Gastrocnemius medialis (tissue), 4 donors: ENCODE measurements at regions of chr19 and their contacts with region 1.

Region 1: DNA sequence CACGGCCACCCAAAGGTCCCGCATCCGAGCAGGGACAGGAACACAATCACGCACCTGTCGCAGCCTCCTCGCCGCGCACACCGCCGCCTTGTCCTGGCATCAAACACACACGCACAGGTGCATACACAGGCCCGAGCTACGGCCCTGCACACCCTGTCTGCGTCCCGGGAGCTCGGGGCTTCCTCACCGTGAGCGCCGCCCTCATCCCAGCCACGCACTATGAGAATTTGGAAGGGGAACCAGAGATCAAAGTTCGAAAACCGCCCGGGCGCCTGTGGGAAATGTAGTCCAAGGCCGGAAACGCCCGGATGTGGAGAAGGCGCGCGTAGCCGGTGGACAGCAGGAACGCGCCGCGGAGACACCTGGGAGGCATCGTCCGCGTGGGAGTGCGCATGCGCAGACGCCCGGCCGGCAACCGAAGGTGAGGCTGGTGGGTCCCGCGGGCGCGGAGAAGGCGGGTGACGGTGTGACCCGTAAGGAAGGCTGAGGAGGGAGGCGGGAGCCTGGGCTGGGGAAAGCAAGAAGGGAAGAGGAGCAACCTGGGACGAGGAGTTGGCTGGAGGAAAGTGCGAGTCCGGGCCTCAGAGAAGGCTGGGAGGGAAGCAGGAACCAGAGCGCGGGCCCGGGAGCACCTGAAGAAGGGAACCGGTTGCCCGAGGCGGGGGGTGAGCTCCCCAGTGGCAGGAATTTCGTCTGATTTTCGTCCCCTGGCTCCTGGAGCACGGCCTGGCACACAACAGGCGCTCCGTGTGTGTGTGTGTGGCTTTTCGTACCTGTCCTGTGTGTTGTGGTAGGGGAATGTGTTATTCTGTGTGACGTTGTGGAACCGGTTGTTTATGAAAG is at the start of gene ZNF567:
- DNase-seq: peak; percentile 93 to 96
- ATAC-seq: peak; percentile 99
- H3K4me3 ChIP-seq: peak within 1 kb of the TSS; percentile 76 to 96 (median 90)
- H3K27ac ChIP-seq: peak within 1 kb of the TSS; percentile 77 to 87 (median 81)
- H3K4me1 ChIP-seq: peaks cover 13 to 16% of the 10 kb centered on the region in 2 donors
- H3K27me3 ChIP-seq: no peaks in the 10 kb centered on the region
- CTCF ChIP-seq: no peak
- POLR2A ChIP-seq: peak; percentile 68 to 74
- total RNA-seq, gene ZNF567: 1.1 to 3.5 (median 1.9) TPM

Region 2: GRCh38 chr19:36573020-36573885 is 114.2 kb before region 1 on chr19 and contains the start of gene ZNF529:
- in situ Hi-C with region 1: no loop called
- intact Hi-C with region 1: loop called (anchors 10 kb)
- DNase-seq: peak; percentile 79 to 85
- ATAC-seq: peak; percentile 99
- H3K4me3 ChIP-seq: peak within 1 kb of the TSS; percentile 85 to 100 (median 94)
- H3K27ac ChIP-seq: peak within 1 kb of the TSS; percentile 81 to 91 (median 88)
- H3K4me1 ChIP-seq: peaks cover 16 to 17% of the 10 kb centered on the region in 2 donors
- H3K27me3 ChIP-seq: no peaks in the 10 kb centered on the region
- CTCF ChIP-seq: no peak
- POLR2A ChIP-seq: peak; percentile 73 to 75
- total RNA-seq, gene ZNF529: 4.1 to 6.6 (median 5.4) TPM

Region 3: DNA sequence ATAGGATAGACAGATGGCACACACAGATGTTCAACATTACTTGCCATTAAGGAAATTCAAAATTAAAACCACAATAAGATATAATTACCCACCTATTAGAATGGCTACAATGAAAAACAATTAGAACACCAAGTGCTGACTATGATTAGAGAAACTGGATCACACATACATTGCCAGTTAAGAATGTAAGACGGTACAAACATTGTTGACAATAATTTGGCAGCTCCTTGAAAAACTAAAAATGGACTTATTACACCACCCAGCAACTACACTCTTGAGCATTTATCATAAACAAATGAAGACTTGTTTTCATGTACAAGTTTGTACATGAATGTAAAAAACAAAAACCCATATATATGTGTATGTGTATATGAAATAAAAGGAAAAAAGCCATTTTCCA is 34.5 kb before region 1 on chr19:
- in situ Hi-C with region 1: no loop called
- intact Hi-C with region 1: no loop called
- DNase-seq: no peak
- ATAC-seq: no peak
- H3K4me3 ChIP-seq: no peak overlapping the region
- H3K27ac ChIP-seq: no peak overlapping the region
- H3K4me1 ChIP-seq: no peaks in the 10 kb centered on the region
- H3K27me3 ChIP-seq: no peaks in the 10 kb centered on the region
- CTCF ChIP-seq: no peak
- POLR2A ChIP-seq: no peak

Region 4: GRCh38 chr19:36772311-36773222 is 85.1 kb after region 1 on chr19 and contains the start of gene ZNF850:
- in situ Hi-C with region 1: no loop called
- intact Hi-C with region 1: loop called (anchors 1 kb)
- DNase-seq: peak; percentile 82 to 83
- ATAC-seq: peak; percentile 97 to 98
- H3K4me3 ChIP-seq: peak within 1 kb of the TSS; percentile 71 to 98 (median 86)
- H3K27ac ChIP-seq: peak within 1 kb of the TSS; percentile 74 to 89 (median 84)
- H3K4me1 ChIP-seq: peaks cover 11 to 20% of the 10 kb centered on the region in 2 donors
- H3K27me3 ChIP-seq: peaks cover 0 to 4% (median 0%) of the 10 kb centered on the region in 3 donors
- CTCF ChIP-seq: no peak
- POLR2A ChIP-seq: peak in 1 of 2 donors; percentile 30
- total RNA-seq, gene ZNF850: 0.24 to 0.55 (median 0.42) TPM

Region 5: DNA sequence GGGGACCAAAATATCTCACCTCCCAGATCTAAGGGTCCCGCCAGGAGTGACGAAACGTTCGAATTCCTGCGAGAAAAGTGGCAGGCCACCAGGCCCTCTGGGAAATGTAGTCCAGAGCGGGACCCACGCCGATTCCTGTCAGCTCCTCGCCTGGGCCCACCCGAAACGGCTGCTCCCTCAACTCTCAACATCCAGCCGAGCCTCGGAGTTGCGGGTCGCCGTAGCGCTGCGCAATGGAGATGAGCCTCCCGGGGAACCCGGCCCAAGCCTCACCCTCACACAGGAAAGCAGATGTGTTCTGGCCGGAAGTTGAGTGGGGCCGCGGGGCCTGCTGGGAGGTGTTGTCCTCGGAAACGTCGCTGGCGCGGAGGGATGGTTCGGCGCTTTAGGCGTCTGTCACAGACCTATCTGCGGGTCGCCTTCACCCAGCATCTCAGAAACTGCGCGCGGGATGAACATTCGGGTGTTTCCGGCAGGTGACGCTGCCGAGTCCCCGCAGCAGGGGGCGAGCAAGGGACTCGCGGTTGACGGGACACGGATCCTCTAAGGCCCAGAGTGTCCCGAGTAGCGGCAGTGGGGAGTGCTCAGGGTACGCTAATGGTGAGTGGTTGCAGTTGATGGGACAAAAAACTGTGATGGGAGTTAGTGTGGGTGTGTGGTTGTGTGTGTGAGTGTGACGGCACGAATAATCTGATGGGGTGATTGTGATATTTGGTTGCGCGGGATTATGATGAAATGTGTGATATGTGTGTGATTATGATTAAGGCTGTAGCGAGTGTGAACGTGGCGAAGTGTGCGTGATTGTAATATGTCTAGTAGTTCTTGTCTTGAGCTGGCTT is 228.8 kb after region 1 on chr19 and contains the starts of genes ZNF568 and ZNF829:
- in situ Hi-C with region 1: no loop called
- intact Hi-C with region 1: loop called (anchors 5 kb)
- DNase-seq: peak; percentile 76 to 79
- ATAC-seq: peak; percentile 98
- H3K4me3 ChIP-seq: peak within 1 kb of the TSS; percentile 82 to 98 (median 83)
- H3K27ac ChIP-seq: peak within 1 kb of the TSS; percentile 92 to 97 (median 94)
- H3K4me1 ChIP-seq: peaks cover 8 to 12% of the 10 kb centered on the region in 2 donors
- H3K27me3 ChIP-seq: no peaks in the 10 kb centered on the region
- CTCF ChIP-seq: peak; percentile 32 to 64 (median 46)
- POLR2A ChIP-seq: peak in 1 of 2 donors; percentile 12
- total RNA-seq, gene ZNF568: 3.0 to 10.2 (median 5.4) TPM
- total RNA-seq, gene ZNF829: 0.97 to 1.5 (median 1.2) TPM

Region 6: GRCh38 chr19:38062959-38063761 is 1375.7 kb after region 1 on chr19:
- in situ Hi-C with region 1: no loop called
- intact Hi-C with region 1: no loop called
- DNase-seq: no peak
- ATAC-seq: no peak
- H3K4me3 ChIP-seq: no peak overlapping the region
- H3K27ac ChIP-seq: no peak overlapping the region
- H3K4me1 ChIP-seq: peaks cover 0 to 5% of the 10 kb centered on the region in 2 donors
- H3K27me3 ChIP-seq: no peaks in the 10 kb centered on the region
- CTCF ChIP-seq: no peak
- POLR2A ChIP-seq: no peak